ENCODE measurements at regions of chr13 and their contacts with region 1.

Region 1: GRCh38 chr13:112874751-112875300 is 94.2 kb upstream of the MCF2L start:
- DNase-seq: no peak
- H3K4me3 ChIP-seq: peak overlapping the region in 1 of 4 donors; percentile 28
- H3K27ac ChIP-seq: peak overlapping the region in 2 of 5 donors; percentile 43 to 62
- H3K4me1 ChIP-seq: peaks cover 0 to 12% (median 9%) of the 10 kb centered on the region in 4 donors
- H3K27me3 ChIP-seq: no peaks in the 10 kb centered on the region
- CTCF ChIP-seq: no peak
- EP300 ChIP-seq: no peak
- POLR2A ChIP-seq: no peak

Region 2: DNA sequence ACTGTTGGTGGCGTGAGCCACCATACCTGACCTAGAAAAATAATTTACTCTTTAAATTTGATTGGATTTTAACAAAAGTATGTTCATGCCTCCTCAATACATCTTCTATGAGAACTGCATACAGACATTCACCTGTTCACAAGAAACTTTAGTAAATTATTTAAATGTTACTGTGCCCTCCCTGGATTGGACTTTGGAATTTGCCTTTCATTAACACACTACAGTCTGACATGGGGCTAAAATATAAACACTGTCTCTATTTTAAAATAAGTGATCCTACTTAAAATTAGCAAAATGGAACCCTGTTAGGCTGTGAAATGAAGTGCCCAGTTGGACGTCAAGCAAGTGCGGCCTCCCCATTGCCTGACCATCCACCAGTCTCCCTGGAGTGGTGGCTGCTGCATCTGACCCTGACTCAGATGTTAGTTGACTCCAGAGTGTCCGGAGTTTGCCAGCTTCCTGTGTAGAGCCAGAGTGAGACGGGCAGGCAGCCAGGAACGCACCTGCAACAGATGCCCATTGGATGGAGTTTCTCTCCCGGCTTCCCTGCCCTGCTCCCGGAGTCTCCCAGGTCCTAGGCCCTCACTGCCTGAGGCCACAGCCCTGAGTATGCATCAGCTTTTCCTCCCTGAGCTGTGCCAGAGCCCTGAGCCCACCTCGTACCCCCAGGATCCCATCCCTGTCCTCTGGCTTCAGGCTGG is 230.9 kb before region 1 on chr13:
- intact Hi-C with region 1: loop called (anchors 5 kb)
- DNase-seq: peak; percentile 68 to 84
- H3K4me3 ChIP-seq: no peak overlapping the region
- H3K27ac ChIP-seq: no peak overlapping the region
- H3K4me1 ChIP-seq: peaks cover 0 to 6% (median 3%) of the 10 kb centered on the region in 4 donors
- H3K27me3 ChIP-seq: peaks cover 0 to 16% (median 6%) of the 10 kb centered on the region in 3 donors
- CTCF ChIP-seq: no peak
- EP300 ChIP-seq: no peak
- POLR2A ChIP-seq: no peak

Measured in stomach (tissue), 19 donors.